MCF 10A (cell line): ENCODE measurements at regions of chr1 and their contacts with region 1.

Region 1: GRCh38 chr1:27525296-27526272 is 35.6 kb upstream of the WASF2 start:
- DNase-seq: no peak
- H3K4me3 Mint-ChIP-seq: peak overlapping the region; percentile 22
- H3K27ac Mint-ChIP-seq: peak overlapping the region; percentile 22
- H3K4me1 Mint-ChIP-seq: peaks cover 71% of the 10 kb centered on the region
- H3K27me3 Mint-ChIP-seq: no peaks in the 10 kb centered on the region
- CTCF ChIP-seq: no peak

Region 2: DNA sequence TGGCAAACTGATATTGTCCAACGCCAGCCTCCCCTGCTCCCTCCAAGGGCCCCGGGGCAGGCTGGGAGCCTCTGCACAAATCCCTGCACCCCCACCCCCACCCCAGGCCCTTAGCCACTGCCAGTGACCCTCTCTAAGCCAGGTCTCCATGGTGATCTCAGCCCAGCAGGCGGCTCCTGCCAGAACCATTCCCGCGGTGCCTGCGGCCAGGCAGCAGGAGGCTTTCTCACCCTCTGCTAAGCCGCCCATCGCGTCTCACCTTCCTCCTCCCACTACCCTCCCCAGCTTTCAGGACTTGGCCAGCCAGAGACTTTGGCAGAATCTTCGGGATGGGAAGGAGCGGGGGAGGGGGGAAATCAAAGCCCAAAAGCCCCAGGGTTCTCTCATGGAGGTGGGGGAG is 11.2 kb after region 1 on chr1:
- CTCF ChIA-PET with region 1: no interaction called
- POLR2A ChIA-PET with region 1: interaction called, 78 read pairs
- intact Hi-C with region 1: no loop called
- DNase-seq: peak; percentile 64
- H3K4me3 Mint-ChIP-seq: no peak overlapping the region
- H3K27ac Mint-ChIP-seq: no peak overlapping the region
- H3K4me1 Mint-ChIP-seq: peaks cover 30% of the 10 kb centered on the region
- H3K27me3 Mint-ChIP-seq: no peaks in the 10 kb centered on the region
- CTCF ChIP-seq: no peak